ENCODE measurements at regions of chr15 and their contacts with region 1.

Region 1: GRCh38 chr15:84658080-84658787 is at the start of gene NMB:
- DNase-seq: peak; percentile 68 to 91 (median 80)
- ATAC-seq: peak; percentile 72 to 77 (median 76)
- H3K4me3 ChIP-seq: peak within 1 kb of the TSS; percentile 62 to 76
- H3K4me3 Mint-ChIP-seq: peak within 1 kb of the TSS; percentile 73 to 80 (median 76)
- H3K27ac ChIP-seq: peak within 1 kb of the TSS; percentile 64
- H3K27ac Mint-ChIP-seq: peak within 1 kb of the TSS; percentile 81 to 84
- H3K4me1 ChIP-seq: peaks cover 7 to 45% of the 10 kb centered on the region in 2 experiments
- H3K4me1 Mint-ChIP-seq: peaks cover 27 to 46% (median 34%) of the 10 kb centered on the region in 3 donors
- H3K27me3 ChIP-seq: no peaks in the 10 kb centered on the region
- H3K27me3 Mint-ChIP-seq: no peaks in the 10 kb centered on the region
- total RNA-seq, gene NMB: 1.3 to 3.5 (median 2.9) TPM

Region 2: DNA sequence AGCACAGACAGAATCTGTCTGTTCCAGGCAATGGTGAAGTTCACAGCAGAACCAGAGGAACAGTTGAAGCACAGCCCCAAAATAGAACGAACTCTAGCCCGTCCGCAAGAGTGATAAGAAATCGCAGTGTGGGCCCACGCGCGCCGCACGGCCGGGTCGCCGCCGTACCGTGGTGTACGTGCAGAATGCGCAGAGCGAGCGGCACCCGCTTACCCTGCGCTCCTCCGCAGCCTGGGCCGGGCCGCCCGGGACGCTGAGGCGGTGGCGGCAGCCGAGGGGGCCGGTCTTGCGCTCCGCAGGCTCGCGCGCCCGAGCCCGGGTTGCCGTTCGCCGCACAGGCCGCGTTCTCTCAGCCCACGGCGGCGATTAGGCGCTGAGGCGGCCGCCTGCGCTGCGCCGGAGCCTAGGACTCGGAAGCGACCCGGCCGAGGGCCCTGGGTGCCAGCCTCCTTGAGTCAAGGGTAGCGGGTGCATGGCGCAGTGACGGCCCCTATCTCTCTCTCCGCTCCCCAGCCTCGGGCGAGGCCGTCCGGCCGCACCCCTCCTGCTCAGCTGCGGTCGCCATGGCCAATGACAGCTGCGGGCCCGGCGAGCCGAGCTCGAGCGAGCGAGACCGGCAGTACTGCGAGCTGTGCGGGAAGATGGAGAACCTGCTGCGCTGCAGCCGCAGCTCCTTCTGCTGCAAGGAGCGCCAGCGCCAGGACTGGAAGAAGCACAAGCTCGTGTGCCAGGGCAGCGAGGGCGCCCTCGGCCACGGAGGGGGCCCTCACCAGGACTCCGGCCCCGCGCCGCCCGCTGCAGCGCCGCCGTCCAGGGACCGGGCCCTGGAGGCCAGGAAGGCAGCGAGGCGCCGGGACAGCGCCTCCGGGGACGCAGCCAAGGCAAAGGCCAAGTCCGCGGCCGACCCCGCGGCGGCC is 24.7 kb before region 1 on chr15:
- CTCF ChIA-PET with region 1: interaction called in 1 of 2 experiments, 5 read pairs
- POLR2A ChIA-PET with region 1: interaction called, 5 to 13 read pairs
- DNase-seq: peak; percentile 18 to 77 (median 52)
- ATAC-seq: peak; percentile 57 to 67 (median 62)
- H3K4me3 ChIP-seq: peak overlapping the region; percentile 58 to 76
- H3K4me3 Mint-ChIP-seq: peak overlapping the region; percentile 88 to 96 (median 95)
- H3K27ac ChIP-seq: peak overlapping the region; percentile 80
- H3K27ac Mint-ChIP-seq: peak overlapping the region; percentile 97
- H3K4me1 ChIP-seq: peaks cover 26 to 40% of the 10 kb centered on the region in 2 experiments
- H3K4me1 Mint-ChIP-seq: peaks cover 48 to 52% (median 49%) of the 10 kb centered on the region in 3 donors
- H3K27me3 ChIP-seq: no peaks in the 10 kb centered on the region
- H3K27me3 Mint-ChIP-seq: no peaks in the 10 kb centered on the region

Region 3: DNA sequence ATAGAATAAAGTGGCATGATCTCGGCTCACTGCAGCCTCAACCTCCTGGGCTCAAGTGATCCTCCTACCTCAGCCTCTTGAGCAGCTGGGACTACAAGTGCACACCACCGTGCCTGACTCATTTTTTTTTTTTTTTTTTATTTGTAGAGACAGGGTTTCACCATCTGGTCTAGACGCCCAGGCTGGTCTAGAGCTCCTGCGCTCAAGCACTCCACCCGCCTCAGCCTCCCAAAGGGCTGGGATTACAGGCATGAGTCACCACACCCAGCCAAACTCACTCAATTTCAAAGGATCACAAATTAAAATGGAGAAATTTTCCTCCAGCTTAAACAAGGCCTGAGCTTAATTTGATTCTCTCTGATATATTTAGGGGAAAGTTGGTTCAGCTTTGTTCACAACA is 27.1 kb after region 1 on chr15:
- CTCF ChIA-PET with region 1: no interaction called
- POLR2A ChIA-PET with region 1: interaction called in 1 of 2 experiments, 19 read pairs
- DNase-seq: peak in 1 of 35 experiments; percentile 2
- ATAC-seq: no peak
- H3K4me3 ChIP-seq: no peak overlapping the region
- H3K4me3 Mint-ChIP-seq: no peak overlapping the region
- H3K27ac ChIP-seq: no peak overlapping the region
- H3K27ac Mint-ChIP-seq: peak overlapping the region in 1 of 2 donors; percentile 52
- H3K4me1 ChIP-seq: no peaks in the 10 kb centered on the region
- H3K4me1 Mint-ChIP-seq: peaks cover 5 to 32% (median 21%) of the 10 kb centered on the region in 3 donors
- H3K27me3 ChIP-seq: no peaks in the 10 kb centered on the region
- H3K27me3 Mint-ChIP-seq: no peaks in the 10 kb centered on the region

Region 4: GRCh38 chr15:84716036-84716799 is 58.0 kb after region 1 on chr15 and contains the start of gene SEC11A:
- CTCF ChIA-PET with region 1: interaction called in 1 of 2 experiments, 13 read pairs
- POLR2A ChIA-PET with region 1: interaction called in 1 of 2 experiments, 7 read pairs
- DNase-seq: peak; percentile 80 to 93 (median 88)
- ATAC-seq: peak; percentile 96 to 97 (median 96)
- H3K4me3 ChIP-seq: peak within 1 kb of the TSS; percentile 65 to 95
- H3K4me3 Mint-ChIP-seq: peak within 1 kb of the TSS; percentile 88 to 97 (median 89)
- H3K27ac ChIP-seq: peak within 1 kb of the TSS; percentile 78
- H3K27ac Mint-ChIP-seq: peak within 1 kb of the TSS; percentile 97 to 98
- H3K4me1 ChIP-seq: peaks cover 25% of the 10 kb centered on the region in 2 experiments
- H3K4me1 Mint-ChIP-seq: peaks cover 47 to 63% (median 49%) of the 10 kb centered on the region in 3 donors
- H3K27me3 ChIP-seq: no peaks in the 10 kb centered on the region
- H3K27me3 Mint-ChIP-seq: no peaks in the 10 kb centered on the region
- total RNA-seq, gene SEC11A: 52.3 to 68.9 (median 66.5) TPM

Region 5: GRCh38 chr15:85289677-85290365 is 631.6 kb after region 1 on chr15:
- CTCF ChIA-PET with region 1: no interaction called
- POLR2A ChIA-PET with region 1: no interaction called
- DNase-seq: peak in 13 of 35 experiments; percentile 2 to 60 (median 5)
- ATAC-seq: peak in 1 of 4 experiments; percentile 32
- H3K4me3 ChIP-seq: no peak overlapping the region
- H3K4me3 Mint-ChIP-seq: no peak overlapping the region
- H3K27ac ChIP-seq: no peak overlapping the region
- H3K27ac Mint-ChIP-seq: no peak overlapping the region
- H3K4me1 ChIP-seq: no peaks in the 10 kb centered on the region
- H3K4me1 Mint-ChIP-seq: peaks cover 0 to 4% (median 0%) of the 10 kb centered on the region in 3 donors
- H3K27me3 ChIP-seq: peaks cover 0 to 9% of the 10 kb centered on the region in 2 experiments
- H3K27me3 Mint-ChIP-seq: peaks cover 10 to 14% of the 10 kb centered on the region in 2 donors